Gastrocnemius medialis (tissue), 4 donors: ENCODE measurements at regions of chr6 and their contacts with region 1.

Region 1: GRCh38 chr6:166556871-166557322 is 29.6 kb downstream of the RAMACL start:
- DNase-seq: peak; percentile 97 to 99
- ATAC-seq: peak; percentile 81 to 90
- H3K4me3 ChIP-seq: peak overlapping the region; percentile 27 to 44 (median 35)
- H3K27ac ChIP-seq: peak overlapping the region; percentile 86 to 91 (median 86)
- H3K4me1 ChIP-seq: peaks cover 37 to 69% of the 10 kb centered on the region in 2 donors
- H3K27me3 ChIP-seq: no peaks in the 10 kb centered on the region
- CTCF ChIP-seq: peak in 2 of 5 experiments; percentile 11 to 27
- POLR2A ChIP-seq: peak; percentile 88 to 94

Region 2: DNA sequence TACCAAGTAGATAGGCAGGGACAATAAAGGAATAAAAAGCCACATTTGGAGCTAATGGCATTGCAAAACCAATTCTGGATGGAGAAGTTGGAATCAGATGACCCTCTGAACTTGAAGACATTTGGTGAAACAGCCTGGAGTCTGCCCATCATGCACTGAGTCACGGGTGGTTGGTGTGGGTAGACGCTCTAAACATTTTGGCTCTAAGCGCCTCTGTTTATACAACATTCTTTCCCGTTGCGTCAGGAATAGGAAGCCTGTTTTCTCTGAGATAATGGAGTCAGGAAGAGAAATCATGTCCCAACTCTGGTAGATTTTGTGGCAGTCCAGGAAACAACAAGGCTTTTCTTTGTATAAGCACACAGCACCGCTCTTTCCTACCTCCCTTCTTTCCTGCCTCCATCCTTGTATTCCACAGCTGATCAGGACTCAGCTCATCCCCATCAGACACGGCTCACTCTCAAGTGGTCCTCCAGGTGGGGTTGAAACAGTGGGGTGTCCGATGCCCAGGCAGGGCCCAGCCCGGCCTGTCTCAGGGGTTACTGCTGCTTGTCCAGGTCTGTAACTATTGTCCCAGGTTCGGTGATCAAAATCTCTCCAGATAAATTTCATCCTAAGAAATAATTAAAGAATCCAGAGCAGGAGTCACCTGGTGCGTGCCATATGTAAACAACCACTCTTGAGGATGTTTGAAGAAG is 41.7 kb after region 1 on chr6:
- in situ Hi-C with region 1: no loop called
- intact Hi-C with region 1: no loop called
- DNase-seq: peak in 1 of 2 donors; percentile 46
- ATAC-seq: peak; percentile 78 to 92
- H3K4me3 ChIP-seq: no peak overlapping the region
- H3K27ac ChIP-seq: peak overlapping the region; percentile 68 to 77 (median 74)
- H3K4me1 ChIP-seq: peaks cover 11 to 35% of the 10 kb centered on the region in 2 donors
- H3K27me3 ChIP-seq: no peaks in the 10 kb centered on the region
- CTCF ChIP-seq: no peak
- POLR2A ChIP-seq: no peak

Region 3: GRCh38 chr6:166614589-166614988 is 57.7 kb after region 1 on chr6:
- in situ Hi-C with region 1: loop called in 1 of 4 experiments (anchors 5 kb)
- intact Hi-C with region 1: no loop called
- DNase-seq: no peak
- ATAC-seq: peak; percentile 8 to 25
- H3K4me3 ChIP-seq: no peak overlapping the region
- H3K27ac ChIP-seq: peak overlapping the region; percentile 65 to 87 (median 76)
- H3K4me1 ChIP-seq: peaks cover 38 to 79% of the 10 kb centered on the region in 2 donors
- H3K27me3 ChIP-seq: no peaks in the 10 kb centered on the region
- CTCF ChIP-seq: no peak
- POLR2A ChIP-seq: no peak

Region 4: GRCh38 chr6:166627033-166627874 is 70.4 kb after region 1 on chr6 and contains the start of gene RPS6KA2:
- in situ Hi-C with region 1: loop called in 1 of 4 experiments (anchors 10 kb)
- intact Hi-C with region 1: loop called (anchors 1 kb)
- DNase-seq: peak; percentile 100
- ATAC-seq: peak; percentile 72 to 77
- H3K4me3 ChIP-seq: peak within 1 kb of the TSS; percentile 71 to 81 (median 73)
- H3K27ac ChIP-seq: peak within 1 kb of the TSS; percentile 91 to 97 (median 96)
- H3K4me1 ChIP-seq: peaks cover 33 to 51% of the 10 kb centered on the region in 2 donors
- H3K27me3 ChIP-seq: no peaks in the 10 kb centered on the region
- CTCF ChIP-seq: peak in 1 of 5 experiments; percentile 25
- POLR2A ChIP-seq: peak; percentile 97 to 98
- total RNA-seq, gene RPS6KA2: 18.7 to 35.7 (median 27.4) TPM

Region 5: GRCh38 chr6:166633732-166634535 is 77.0 kb after region 1 on chr6:
- in situ Hi-C with region 1: loop called in 1 of 4 experiments (anchors 10 kb)
- intact Hi-C with region 1: loop called (anchors 2 kb)
- DNase-seq: peak; percentile 87 to 92
- ATAC-seq: peak; percentile 94 to 98
- H3K4me3 ChIP-seq: peak overlapping the region in 3 of 4 donors; percentile 15 to 24 (median 23)
- H3K27ac ChIP-seq: peak overlapping the region; percentile 73 to 94 (median 76)
- H3K4me1 ChIP-seq: peaks cover 37 to 38% of the 10 kb centered on the region in 2 donors
- H3K27me3 ChIP-seq: no peaks in the 10 kb centered on the region
- CTCF ChIP-seq: no peak
- POLR2A ChIP-seq: peak; percentile 68 to 83